Heart right ventricle (tissue), 16 donors: ENCODE measurements at regions of chr5 and their contacts with region 1.

Region 1: DNA sequence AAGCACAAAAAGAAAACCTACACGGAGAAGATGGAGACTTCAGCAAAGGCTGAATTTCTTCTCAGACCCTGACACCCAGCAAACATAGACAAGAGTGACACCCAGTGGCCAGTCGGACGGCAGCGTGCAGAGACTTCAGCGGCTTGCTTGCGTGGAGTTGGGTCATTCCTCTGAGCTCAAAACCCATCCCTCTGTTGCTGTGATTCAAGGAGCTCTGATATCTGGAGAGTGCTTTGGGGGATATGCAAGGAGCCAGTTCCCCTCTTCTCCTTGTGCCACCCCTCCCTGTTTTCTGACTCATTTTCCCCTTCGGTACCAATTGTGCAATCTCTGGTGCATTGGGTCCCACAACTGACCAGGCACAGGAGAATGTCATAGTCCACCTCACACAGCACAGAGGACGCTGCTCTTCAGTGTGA is 27.5 kb downstream of the SH3TC2 start:
- DNase-seq: peak; percentile 70 to 81
- ATAC-seq: peak; percentile 83 to 94 (median 91)
- H3K4me3 ChIP-seq: no peak overlapping the region
- H3K27ac ChIP-seq: no peak overlapping the region
- H3K4me1 ChIP-seq: peaks cover 0 to 53% (median 25%) of the 10 kb centered on the region in 9 donors
- H3K27me3 ChIP-seq: no peaks in the 10 kb centered on the region
- CTCF ChIP-seq: peak; percentile 64 to 95 (median 90)

Region 2: GRCh38 chr5:148179234-148179824 is 856.1 kb before region 1 on chr5:
- intact Hi-C with region 1: loop called in 1 of 10 experiments (anchors 10 kb)
- DNase-seq: peak in 1 of 2 donors; percentile 8
- ATAC-seq: peak in 4 of 8 donors; percentile 44 to 60 (median 54)
- H3K4me3 ChIP-seq: no peak overlapping the region
- H3K27ac ChIP-seq: no peak overlapping the region
- H3K4me1 ChIP-seq: no peaks in the 10 kb centered on the region
- H3K27me3 ChIP-seq: no peaks in the 10 kb centered on the region
- CTCF ChIP-seq: peak; percentile 40 to 86 (median 79)

Region 3: GRCh38 chr5:148830220-148830619 is 205.2 kb before region 1 on chr5:
- intact Hi-C with region 1: no loop called
- DNase-seq: no peak
- ATAC-seq: no peak
- H3K4me3 ChIP-seq: peak overlapping the region in 9 of 10 donors; percentile 47 to 76 (median 70)
- H3K27ac ChIP-seq: peak overlapping the region in 8 of 10 donors; percentile 50 to 97 (median 94)
- H3K4me1 ChIP-seq: peaks cover 0 to 94% (median 64%) of the 10 kb centered on the region in 9 donors
- H3K27me3 ChIP-seq: no peaks in the 10 kb centered on the region
- CTCF ChIP-seq: no peak

Region 4: GRCh38 chr5:149185067-149185466 is 149.7 kb after region 1 on chr5:
- intact Hi-C with region 1: no loop called
- DNase-seq: no peak
- ATAC-seq: peak in 4 of 8 donors; percentile 29 to 87 (median 55)
- H3K4me3 ChIP-seq: no peak overlapping the region
- H3K27ac ChIP-seq: peak overlapping the region in 6 of 10 donors; percentile 25 to 66 (median 51)
- H3K4me1 ChIP-seq: peaks cover 0 to 36% (median 18%) of the 10 kb centered on the region in 9 donors
- H3K27me3 ChIP-seq: no peaks in the 10 kb centered on the region
- CTCF ChIP-seq: no peak